ENCODE measurements at regions of chr7 and their contacts with region 1.

Region 1: GRCh38 chr7:105876091-105876963 is at the start of gene ATXN7L1:
- DNase-seq: peak; percentile 90
- H3K4me3 Mint-ChIP-seq: peak within 1 kb of the TSS; percentile 89
- H3K27ac Mint-ChIP-seq: peak within 1 kb of the TSS; percentile 53
- H3K4me1 Mint-ChIP-seq: peaks cover 33% of the 10 kb centered on the region
- H3K27me3 Mint-ChIP-seq: peaks cover 20% of the 10 kb centered on the region
- total RNA-seq, gene ATXN7L1: 27.1 to 28.1 TPM

Region 2: GRCh38 chr7:105849122-105849855 is 27.0 kb before region 1 on chr7:
- CTCF ChIA-PET with region 1: interaction called, 22 read pairs
- POLR2A ChIA-PET with region 1: interaction called, 12 read pairs
- DNase-seq: peak; percentile 86
- H3K4me3 Mint-ChIP-seq: peak overlapping the region; percentile 56
- H3K27ac Mint-ChIP-seq: peak overlapping the region; percentile 85
- H3K4me1 Mint-ChIP-seq: peaks cover 65% of the 10 kb centered on the region
- H3K27me3 Mint-ChIP-seq: no peaks in the 10 kb centered on the region

Region 3: DNA sequence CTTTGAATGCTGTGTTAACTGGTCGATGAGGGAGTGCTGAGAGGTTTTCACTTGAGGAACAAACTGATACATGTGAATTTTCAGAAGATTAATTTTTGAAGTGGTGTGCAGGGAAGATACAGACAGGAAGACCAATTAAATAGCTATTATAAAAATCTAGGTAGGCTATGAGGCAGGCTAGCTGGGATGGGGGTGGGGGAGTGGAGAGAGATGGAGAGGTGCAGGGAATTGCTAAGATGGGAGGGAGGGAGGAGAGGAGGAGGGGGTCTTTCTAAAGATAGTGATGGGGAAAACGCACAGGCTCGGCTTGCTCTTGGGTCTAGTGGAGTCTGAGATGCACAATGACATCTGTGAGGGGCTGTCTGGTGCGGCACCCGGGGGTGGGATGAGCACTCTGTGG is 15.1 kb before region 1 on chr7:
- CTCF ChIA-PET with region 1: no interaction called
- POLR2A ChIA-PET with region 1: no interaction called
- DNase-seq: no peak
- H3K4me3 Mint-ChIP-seq: no peak overlapping the region
- H3K27ac Mint-ChIP-seq: no peak overlapping the region
- H3K4me1 Mint-ChIP-seq: peaks cover 14% of the 10 kb centered on the region
- H3K27me3 Mint-ChIP-seq: peaks cover 13% of the 10 kb centered on the region

Region 4: DNA sequence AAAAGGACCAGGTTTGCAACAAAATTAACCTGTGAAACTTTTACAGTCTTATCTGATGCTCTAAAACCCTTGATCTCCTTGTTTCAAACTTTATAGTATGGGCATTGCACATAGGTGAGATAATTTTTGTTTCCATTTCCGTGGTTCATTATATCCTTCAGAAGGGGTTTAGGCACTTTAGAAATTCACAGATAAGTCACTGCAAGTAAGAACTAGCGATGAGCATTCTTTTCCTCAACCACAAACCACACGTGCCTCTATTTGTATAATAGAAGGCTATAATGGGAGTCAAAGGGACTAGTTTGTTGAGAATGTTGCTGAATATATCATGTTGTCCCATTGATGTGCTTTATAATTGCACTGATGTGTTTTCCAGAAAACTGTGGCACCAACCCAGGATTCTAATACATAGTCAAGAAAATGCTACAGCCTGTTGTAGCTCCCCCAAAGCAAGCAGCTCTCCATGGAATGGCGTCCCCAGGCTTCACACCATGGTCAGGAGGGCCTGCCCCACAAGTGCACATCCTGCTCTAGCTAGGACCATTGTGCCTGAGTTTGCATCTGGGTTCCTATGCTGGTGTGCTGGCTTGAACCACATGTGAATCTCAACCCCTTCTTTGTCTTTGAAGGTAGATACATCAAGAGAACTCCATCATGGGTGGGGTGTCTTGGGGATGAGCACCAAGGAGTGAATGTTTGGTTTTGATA is 14.1 kb after region 1 on chr7:
- CTCF ChIA-PET with region 1: interaction called, 16 read pairs
- POLR2A ChIA-PET with region 1: interaction called, 6 read pairs
- DNase-seq: no peak
- H3K4me3 Mint-ChIP-seq: no peak overlapping the region
- H3K27ac Mint-ChIP-seq: no peak overlapping the region
- H3K4me1 Mint-ChIP-seq: peaks cover 5% of the 10 kb centered on the region
- H3K27me3 Mint-ChIP-seq: peaks cover 3% of the 10 kb centered on the region